Activated naive CD4-positive, alpha-beta T cell treated with anti-CD3 and anti-CD28 coated beads for 36 hours (primary cell): ENCODE measurements at regions of chr5 and their contacts with region 1.

Region 1: GRCh38 chr5:52725065-52725746 is 62.5 kb upstream of the ITGA1 start:
- DNase-seq: peak; percentile 78
- H3K4me3 Mint-ChIP-seq: no peak overlapping the region
- H3K27ac Mint-ChIP-seq: peak overlapping the region; percentile 27
- H3K4me1 Mint-ChIP-seq: peaks cover 37% of the 10 kb centered on the region
- H3K27me3 Mint-ChIP-seq: no peaks in the 10 kb centered on the region

Region 2: DNA sequence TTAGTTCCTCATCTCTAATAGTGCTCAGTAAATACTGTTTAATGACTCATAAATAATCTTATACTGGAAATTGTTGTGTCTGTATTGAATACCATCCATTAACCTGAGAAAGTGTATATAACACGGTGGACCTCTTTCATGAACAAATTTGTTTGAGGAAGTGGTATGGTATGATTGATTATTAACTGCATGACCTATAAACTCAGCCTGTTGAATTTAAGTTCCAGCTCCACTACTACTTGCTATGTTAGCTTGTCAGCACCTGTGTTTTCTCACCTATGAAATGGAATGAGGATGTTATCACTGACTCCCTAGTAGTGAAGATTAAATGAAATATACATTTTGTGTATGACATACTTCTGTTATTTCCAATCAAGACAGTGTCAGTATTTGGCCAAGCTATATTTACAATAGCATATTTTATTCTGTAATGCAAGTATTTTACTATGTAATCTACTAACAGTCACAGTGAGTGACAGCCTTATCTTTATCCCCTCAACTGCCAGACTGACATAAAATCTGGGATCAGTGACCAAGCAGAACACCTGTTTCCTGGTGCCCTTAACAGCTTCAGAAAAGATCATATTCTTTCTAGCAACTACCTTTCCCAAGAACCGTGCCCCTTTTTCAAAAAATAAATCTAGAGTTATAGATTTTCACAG is 14.8 kb before region 1 on chr5:
- CTCF ChIA-PET with region 1: interaction called, 3 read pairs
- intact Hi-C with region 1: loop called (anchors 2 kb)
- DNase-seq: no peak
- H3K4me3 Mint-ChIP-seq: no peak overlapping the region
- H3K27ac Mint-ChIP-seq: no peak overlapping the region
- H3K4me1 Mint-ChIP-seq: peaks cover 29% of the 10 kb centered on the region
- H3K27me3 Mint-ChIP-seq: peaks cover 2% of the 10 kb centered on the region

Region 3: GRCh38 chr5:52743970-52744369 is 18.8 kb after region 1 on chr5:
- CTCF ChIA-PET with region 1: interaction called, 3 read pairs
- intact Hi-C with region 1: loop called (anchors 1 kb)
- DNase-seq: peak; percentile 66
- H3K4me3 Mint-ChIP-seq: no peak overlapping the region
- H3K27ac Mint-ChIP-seq: peak overlapping the region; percentile 32
- H3K4me1 Mint-ChIP-seq: peaks cover 44% of the 10 kb centered on the region
- H3K27me3 Mint-ChIP-seq: no peaks in the 10 kb centered on the region

Region 4: DNA sequence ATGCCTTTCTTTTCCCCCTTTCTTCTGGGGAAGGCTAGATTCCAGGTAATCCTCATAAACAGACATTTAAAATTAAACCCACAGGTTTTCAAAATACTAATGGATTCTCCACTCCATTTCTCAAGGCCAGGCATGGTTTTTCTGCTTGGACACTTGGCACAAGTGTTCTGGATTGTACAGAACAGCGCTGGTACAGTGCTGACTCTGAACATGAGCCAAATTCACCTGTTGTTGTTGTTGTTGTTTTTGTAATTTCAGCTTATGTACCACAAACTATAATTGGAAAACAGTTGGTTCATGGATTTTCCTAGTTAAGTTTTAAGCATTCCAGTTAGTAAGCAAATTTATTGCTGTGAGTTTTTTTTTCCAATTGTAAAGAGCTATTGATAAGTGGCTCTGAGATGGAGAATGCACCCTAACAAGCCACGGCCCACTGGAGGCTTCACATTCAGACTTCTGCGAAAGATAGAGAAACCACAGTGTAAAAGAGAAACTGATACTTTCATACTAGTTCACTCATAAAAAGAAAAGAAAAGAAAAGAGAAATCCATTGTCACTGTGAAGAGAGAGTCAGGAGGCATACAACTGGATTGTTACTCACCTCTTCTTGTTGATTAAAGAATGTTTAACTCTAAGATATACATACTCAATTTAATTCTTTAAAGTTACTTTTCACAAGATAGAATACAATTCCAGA is 46.3 kb after region 1 on chr5:
- CTCF ChIA-PET with region 1: no interaction called
- intact Hi-C with region 1: loop called (anchors 1 kb)
- DNase-seq: peak; percentile 63
- H3K4me3 Mint-ChIP-seq: no peak overlapping the region
- H3K27ac Mint-ChIP-seq: no peak overlapping the region
- H3K4me1 Mint-ChIP-seq: peaks cover 46% of the 10 kb centered on the region
- H3K27me3 Mint-ChIP-seq: no peaks in the 10 kb centered on the region

Region 5: GRCh38 chr5:53481887-53482716 is 756.9 kb after region 1 on chr5:
- CTCF ChIA-PET with region 1: no interaction called
- intact Hi-C with region 1: no loop called
- DNase-seq: peak; percentile 71
- H3K4me3 Mint-ChIP-seq: peak overlapping the region; percentile 76
- H3K27ac Mint-ChIP-seq: no peak overlapping the region
- H3K4me1 Mint-ChIP-seq: peaks cover 15% of the 10 kb centered on the region
- H3K27me3 Mint-ChIP-seq: peaks cover 38% of the 10 kb centered on the region